Sigmoid colon (tissue), 7 donors: ENCODE measurements at regions of chr17 and their contacts with region 1.

Region 1: GRCh38 chr17:69327060-69327831 is at the start of gene ABCA5:
- DNase-seq: peak; percentile 92
- H3K4me3 ChIP-seq: peak within 1 kb of the TSS; percentile 78 to 86 (median 82)
- H3K27ac ChIP-seq: peak within 1 kb of the TSS; percentile 83 to 88 (median 88)
- H3K4me1 ChIP-seq: peaks cover 0 to 21% (median 12%) of the 10 kb centered on the region in 4 donors
- H3K27me3 ChIP-seq: no peaks in the 10 kb centered on the region
- CTCF ChIP-seq: no peak
- EP300 ChIP-seq: no peak
- POLR2A ChIP-seq: peak; percentile 29 to 57
- total RNA-seq, gene ABCA5: 19.3 to 23.5 (median 21.4) TPM

Region 2: GRCh38 chr17:67993596-67994361 is 1333.5 kb before region 1 on chr17:
- intact Hi-C with region 1: loop called (anchors 10 kb)
- DNase-seq: peak; percentile 90
- H3K4me3 ChIP-seq: peak overlapping the region; percentile 64 to 78 (median 70)
- H3K27ac ChIP-seq: peak overlapping the region; percentile 94 to 96 (median 96)
- H3K4me1 ChIP-seq: peaks cover 0 to 33% (median 23%) of the 10 kb centered on the region in 4 donors
- H3K27me3 ChIP-seq: no peaks in the 10 kb centered on the region
- CTCF ChIP-seq: no peak
- EP300 ChIP-seq: no peak
- POLR2A ChIP-seq: peak in 1 of 2 donors; percentile 41

Region 3: DNA sequence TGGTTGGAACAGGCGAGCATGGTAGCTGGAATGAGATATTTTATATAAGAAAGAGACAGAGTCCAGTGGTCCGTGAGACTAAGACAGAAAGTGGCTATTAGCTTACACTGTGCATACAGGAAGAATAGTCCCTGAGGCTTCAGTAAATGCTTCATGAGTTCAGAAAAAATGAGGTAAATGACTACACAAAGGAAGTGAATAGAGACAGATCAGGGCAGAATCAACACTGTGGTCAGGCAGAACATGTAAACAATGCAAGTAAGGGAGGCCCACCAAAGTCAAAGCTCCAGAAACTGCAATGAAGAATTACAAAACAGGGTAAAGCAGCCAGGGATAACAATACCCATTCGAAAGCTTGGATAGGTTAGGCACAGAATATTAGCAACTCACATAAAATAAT is 103.4 kb before region 1 on chr17:
- intact Hi-C with region 1: no loop called
- DNase-seq: no peak
- H3K4me3 ChIP-seq: no peak overlapping the region
- H3K27ac ChIP-seq: no peak overlapping the region
- H3K4me1 ChIP-seq: no peaks in the 10 kb centered on the region
- H3K27me3 ChIP-seq: no peaks in the 10 kb centered on the region
- CTCF ChIP-seq: no peak
- EP300 ChIP-seq: no peak
- POLR2A ChIP-seq: no peak

Region 4: DNA sequence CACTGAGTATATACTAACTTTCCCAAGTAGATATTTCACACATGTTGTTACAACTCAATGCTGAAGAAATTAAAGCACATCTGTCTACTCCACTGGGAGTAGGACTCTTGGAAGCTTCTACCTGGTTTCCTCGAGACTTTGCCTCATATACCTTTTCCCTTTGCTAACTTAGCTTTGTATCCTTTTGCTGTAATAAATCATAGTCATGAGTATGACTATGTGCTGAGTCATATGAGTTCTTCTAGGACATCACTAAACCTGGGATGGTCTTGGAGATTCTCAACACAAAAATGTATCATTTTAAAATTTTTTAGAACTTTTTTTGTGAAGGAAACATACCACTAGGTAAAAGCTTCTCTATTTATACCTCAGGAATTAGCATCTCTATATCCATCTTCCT is 40.1 kb before region 1 on chr17:
- intact Hi-C with region 1: no loop called
- DNase-seq: no peak
- H3K4me3 ChIP-seq: no peak overlapping the region
- H3K27ac ChIP-seq: no peak overlapping the region
- H3K4me1 ChIP-seq: no peaks in the 10 kb centered on the region
- H3K27me3 ChIP-seq: no peaks in the 10 kb centered on the region
- CTCF ChIP-seq: no peak
- EP300 ChIP-seq: no peak
- POLR2A ChIP-seq: no peak

Region 5: DNA sequence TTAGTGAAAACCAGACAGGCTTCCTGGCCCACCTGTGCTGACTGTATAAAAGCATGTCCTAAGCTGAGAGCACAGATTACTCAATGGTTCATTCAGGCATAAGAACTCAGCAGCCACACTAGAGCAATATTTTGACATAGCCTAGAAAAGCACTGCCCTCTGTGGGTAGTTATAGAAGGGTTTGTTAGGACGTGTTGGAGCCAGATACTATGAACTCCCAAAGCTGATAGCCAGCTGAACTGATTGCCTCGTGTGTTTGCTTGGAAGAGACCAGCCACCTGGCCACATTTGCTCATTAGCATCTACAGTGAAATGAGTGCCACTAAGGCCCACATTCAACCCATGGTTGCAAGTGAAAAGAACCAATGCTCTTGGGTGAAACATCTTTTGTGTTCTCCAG is 30.5 kb after region 1 on chr17:
- intact Hi-C with region 1: no loop called
- DNase-seq: no peak
- H3K4me3 ChIP-seq: no peak overlapping the region
- H3K27ac ChIP-seq: no peak overlapping the region
- H3K4me1 ChIP-seq: no peaks in the 10 kb centered on the region
- H3K27me3 ChIP-seq: no peaks in the 10 kb centered on the region
- CTCF ChIP-seq: no peak
- EP300 ChIP-seq: no peak
- POLR2A ChIP-seq: no peak

Region 6: DNA sequence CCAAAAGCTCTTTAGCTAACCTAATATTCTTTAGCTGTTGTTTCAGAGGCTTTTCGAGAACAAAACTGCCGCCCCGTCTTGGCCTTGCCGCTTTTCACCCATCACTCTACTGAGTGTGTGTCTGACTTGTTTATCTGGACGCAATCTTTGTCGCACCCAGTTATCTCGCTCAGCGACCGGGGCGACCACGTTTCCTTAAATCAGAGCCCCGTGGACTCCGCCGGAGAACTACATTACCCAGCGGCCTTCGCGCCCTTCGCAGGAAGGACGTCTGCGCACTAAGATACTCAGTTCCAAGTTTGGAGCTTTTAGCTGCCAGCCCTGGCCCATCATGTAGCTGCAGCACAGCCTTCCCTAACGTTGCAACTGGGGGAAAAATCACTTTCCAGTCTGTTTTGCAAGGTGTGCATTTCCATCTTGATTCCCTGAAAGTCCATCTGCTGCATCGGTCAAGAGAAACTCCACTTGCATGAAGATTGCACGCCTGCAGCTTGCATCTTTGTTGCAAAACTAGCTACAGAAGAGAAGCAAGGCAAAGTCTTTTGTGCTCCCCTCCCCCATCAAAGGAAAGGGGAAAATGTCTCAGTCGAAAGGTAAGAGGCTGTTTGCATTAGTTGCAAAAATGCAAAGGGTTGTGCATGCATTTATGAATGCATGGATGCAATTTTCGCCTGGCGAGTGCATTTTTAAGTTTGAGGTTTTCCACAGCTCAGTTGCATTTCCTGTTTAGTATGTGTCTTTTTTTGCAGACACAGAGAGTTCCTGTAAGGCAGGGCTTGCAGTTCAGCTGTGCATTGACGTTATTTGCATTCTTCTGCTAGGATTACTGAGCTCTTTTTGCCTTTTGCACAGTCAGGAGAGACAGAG is 87.4 kb after region 1 on chr17 and contains the start of gene MAP2K6:
- intact Hi-C with region 1: loop called (anchors 5 kb)
- DNase-seq: peak; percentile 91
- H3K4me3 ChIP-seq: peak within 1 kb of the TSS; percentile 37 to 58 (median 51)
- H3K27ac ChIP-seq: peak within 1 kb of the TSS; percentile 33 to 71 (median 64)
- H3K4me1 ChIP-seq: peaks cover 0 to 34% (median 29%) of the 10 kb centered on the region in 4 donors
- H3K27me3 ChIP-seq: no peaks in the 10 kb centered on the region
- CTCF ChIP-seq: no peak
- EP300 ChIP-seq: no peak
- POLR2A ChIP-seq: no peak
- total RNA-seq, gene MAP2K6: 1.6 to 9.7 (median 3.2) TPM

Region 7: GRCh38 chr17:69434164-69434579 is 106.9 kb after region 1 on chr17:
- intact Hi-C with region 1: loop called (anchors 5 kb)
- DNase-seq: no peak
- H3K4me3 ChIP-seq: no peak overlapping the region
- H3K27ac ChIP-seq: peak overlapping the region in 2 of 4 donors; percentile 4 to 43
- H3K4me1 ChIP-seq: peaks cover 0 to 33% (median 26%) of the 10 kb centered on the region in 4 donors
- H3K27me3 ChIP-seq: no peaks in the 10 kb centered on the region
- CTCF ChIP-seq: no peak
- EP300 ChIP-seq: no peak
- POLR2A ChIP-seq: no peak

Region 8: GRCh38 chr17:69466905-69467667 is 139.8 kb after region 1 on chr17:
- intact Hi-C with region 1: no loop called
- DNase-seq: no peak
- H3K4me3 ChIP-seq: no peak overlapping the region
- H3K27ac ChIP-seq: no peak overlapping the region
- H3K4me1 ChIP-seq: no peaks in the 10 kb centered on the region
- H3K27me3 ChIP-seq: no peaks in the 10 kb centered on the region
- CTCF ChIP-seq: no peak
- EP300 ChIP-seq: no peak
- POLR2A ChIP-seq: no peak

Region 9: GRCh38 chr17:69525920-69526841 is 198.9 kb after region 1 on chr17:
- intact Hi-C with region 1: loop called (anchors 5 kb)
- DNase-seq: peak; percentile 64
- H3K4me3 ChIP-seq: no peak overlapping the region
- H3K27ac ChIP-seq: no peak overlapping the region
- H3K4me1 ChIP-seq: no peaks in the 10 kb centered on the region
- H3K27me3 ChIP-seq: no peaks in the 10 kb centered on the region
- CTCF ChIP-seq: peak; percentile 69 to 82 (median 78)
- EP300 ChIP-seq: no peak
- POLR2A ChIP-seq: no peak